Activated naive CD4-positive, alpha-beta T cell treated with anti-CD3 and anti-CD28 coated beads for 36 hours (primary cell): ENCODE measurements at regions of chr14 and their contacts with region 1.

Region 1: DNA sequence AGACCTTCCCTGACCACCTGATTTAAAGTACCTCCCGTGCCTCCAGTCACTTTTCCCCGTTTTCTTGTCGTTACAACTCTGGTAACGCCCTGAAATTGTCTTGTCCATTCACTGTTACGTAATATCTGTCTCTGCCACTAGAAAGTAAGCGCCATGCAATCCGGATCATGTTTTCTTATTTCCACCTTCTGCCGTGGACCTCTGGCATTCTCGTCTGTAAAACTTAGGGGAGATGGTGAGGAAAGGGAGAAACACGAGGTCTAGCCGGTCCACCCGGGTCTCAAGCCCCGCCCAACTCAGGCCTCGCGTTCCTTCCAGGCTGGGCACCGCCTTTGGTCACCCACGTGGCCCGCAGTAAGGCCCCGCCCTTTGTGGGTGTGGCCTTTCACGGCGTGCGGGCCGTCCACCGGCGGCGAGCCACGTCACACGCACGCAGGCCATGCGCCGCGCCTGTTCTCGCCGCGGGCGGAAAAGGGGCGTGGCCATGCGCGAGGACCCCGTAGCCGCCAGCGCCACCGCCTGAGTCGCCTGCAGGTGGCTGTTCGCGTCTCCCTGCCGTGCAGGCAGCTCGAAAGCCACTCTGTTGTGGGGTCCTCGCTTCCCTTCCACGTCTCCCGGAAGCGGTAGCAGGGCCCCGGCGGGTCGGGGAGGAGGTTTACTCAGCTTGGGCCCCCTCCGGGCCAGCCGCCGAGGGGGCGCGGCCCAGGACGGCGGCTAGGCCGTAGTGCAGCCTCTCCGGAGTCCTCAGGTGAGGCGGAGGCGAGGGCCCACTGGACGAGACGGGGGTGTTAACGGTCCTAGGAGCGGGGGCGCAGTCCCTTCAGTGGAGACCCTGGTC is at the start of gene GOLGA5:
- DNase-seq: peak; percentile 98
- H3K4me3 Mint-ChIP-seq: peak within 1 kb of the TSS; percentile 99
- H3K27ac Mint-ChIP-seq: peak within 1 kb of the TSS; percentile 92
- H3K4me1 Mint-ChIP-seq: peaks cover 39% of the 10 kb centered on the region
- H3K27me3 Mint-ChIP-seq: no peaks in the 10 kb centered on the region
- total RNA-seq, gene GOLGA5: 14.5 to 14.7 TPM

Region 2: DNA sequence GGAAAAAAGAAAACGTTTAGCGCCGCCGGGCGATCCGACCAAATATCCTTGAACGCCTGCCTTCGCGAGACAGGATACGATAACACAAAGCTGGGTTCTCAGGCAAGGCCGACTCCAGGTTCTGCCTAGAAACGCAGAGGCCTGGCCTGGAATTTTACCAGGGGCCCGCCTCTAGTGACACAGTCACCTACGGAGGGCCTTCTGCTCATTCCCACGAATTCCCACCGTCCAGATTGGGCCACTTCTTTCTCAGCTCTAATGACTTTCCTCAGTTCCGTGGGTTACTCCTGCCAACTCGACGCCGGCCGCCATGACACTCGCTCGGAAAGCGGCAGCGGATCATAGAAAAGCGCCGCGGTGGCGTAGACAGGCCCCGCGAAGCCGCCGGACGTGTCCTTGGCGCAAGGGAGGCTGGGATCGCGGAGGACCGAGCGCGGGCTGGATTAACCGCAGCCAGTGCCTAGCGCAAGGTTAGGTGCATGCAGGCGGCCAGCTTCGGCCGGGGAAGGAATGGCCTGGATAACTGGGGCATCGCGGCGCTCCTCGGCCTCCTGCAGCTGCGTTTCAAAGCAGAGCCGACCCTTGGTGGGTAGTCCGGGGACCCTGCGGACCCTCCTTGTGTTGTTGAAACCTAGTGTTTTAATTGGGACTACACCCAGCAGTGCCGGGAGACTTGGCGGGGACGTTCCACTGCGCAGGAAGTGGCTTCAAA is 754.1 kb before region 1 on chr14 and contains the start of gene TRIP11:
- CTCF ChIA-PET with region 1: no interaction called
- intact Hi-C with region 1: loop called (anchors 2 kb)
- DNase-seq: peak; percentile 97
- H3K4me3 Mint-ChIP-seq: peak within 1 kb of the TSS; percentile 98
- H3K27ac Mint-ChIP-seq: peak within 1 kb of the TSS; percentile 98
- H3K4me1 Mint-ChIP-seq: peaks cover 32% of the 10 kb centered on the region
- H3K27me3 Mint-ChIP-seq: no peaks in the 10 kb centered on the region
- total RNA-seq, gene TRIP11: 22.7 to 26.1 TPM

Region 3: GRCh38 chr14:92748259-92749016 is 45.5 kb before region 1 on chr14 and contains the start of gene LGMN:
- CTCF ChIA-PET with region 1: interaction called, 3 read pairs
- intact Hi-C with region 1: loop called (anchors 1 kb)
- DNase-seq: peak; percentile 90
- H3K4me3 Mint-ChIP-seq: peak within 1 kb of the TSS; percentile 81
- H3K27ac Mint-ChIP-seq: no peak within 1 kb of the TSS
- H3K4me1 Mint-ChIP-seq: peaks cover 35% of the 10 kb centered on the region
- H3K27me3 Mint-ChIP-seq: peaks cover 4% of the 10 kb centered on the region
- total RNA-seq, gene LGMN: 6.9 to 7.7 TPM

Region 4: DNA sequence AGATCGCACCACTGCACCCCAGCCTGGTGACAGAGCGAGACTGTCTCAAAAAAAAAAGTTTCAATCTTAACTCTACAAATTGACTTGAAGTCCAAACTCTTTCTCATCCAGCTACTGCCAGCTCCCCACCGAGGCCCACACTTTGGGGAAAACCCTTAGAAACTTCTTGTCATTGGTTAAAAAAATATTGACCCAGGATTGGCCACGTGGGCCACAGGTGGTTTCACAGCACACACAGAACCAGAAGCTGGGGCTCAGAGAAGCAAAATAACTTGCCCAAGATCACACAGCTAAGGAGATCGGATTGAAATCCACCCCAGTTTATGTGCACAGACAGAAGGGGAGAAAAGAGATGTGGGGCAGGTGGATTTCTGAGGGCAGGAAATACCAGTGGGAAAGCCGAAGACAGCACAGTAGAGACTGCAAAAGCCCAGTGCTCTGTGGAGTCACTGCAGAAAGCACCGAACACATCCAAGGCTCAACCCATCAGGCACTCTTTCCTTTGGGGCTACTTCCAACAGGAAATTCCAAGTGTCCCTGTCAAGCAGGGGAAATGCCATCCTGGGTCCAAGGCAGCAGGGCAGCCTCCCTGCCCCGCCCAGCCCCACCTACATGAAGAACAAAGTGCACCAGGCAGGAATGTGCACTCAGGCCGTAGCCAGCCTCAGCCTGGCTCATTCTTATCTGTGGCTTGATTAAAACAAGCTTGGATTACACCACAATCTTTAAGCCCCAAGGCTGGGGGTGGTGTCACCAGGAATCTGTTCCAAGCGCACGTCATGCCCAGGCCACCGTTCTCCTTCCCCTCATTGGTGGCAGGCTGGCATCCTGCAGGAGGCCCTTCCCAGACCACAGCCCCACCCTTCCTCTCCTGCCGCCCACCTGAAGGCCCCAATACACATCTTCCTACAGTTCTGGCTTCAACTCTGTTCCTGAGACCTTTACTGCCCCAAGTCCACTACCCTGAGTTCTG is 249.3 kb after region 1 on chr14:
- CTCF ChIA-PET with region 1: no interaction called
- intact Hi-C with region 1: no loop called
- DNase-seq: no peak
- H3K4me3 Mint-ChIP-seq: no peak overlapping the region
- H3K27ac Mint-ChIP-seq: no peak overlapping the region
- H3K4me1 Mint-ChIP-seq: peaks cover 16% of the 10 kb centered on the region
- H3K27me3 Mint-ChIP-seq: no peaks in the 10 kb centered on the region

Region 5: GRCh38 chr14:93184388-93185353 is 390.7 kb after region 1 on chr14 and contains the starts of genes LYSET and MOAP1:
- CTCF ChIA-PET with region 1: no interaction called
- intact Hi-C with region 1: loop called (anchors 2 kb)
- DNase-seq: peak; percentile 91
- H3K4me3 Mint-ChIP-seq: peak within 1 kb of the TSS; percentile 88
- H3K27ac Mint-ChIP-seq: peak within 1 kb of the TSS; percentile 91
- H3K4me1 Mint-ChIP-seq: peaks cover 42% of the 10 kb centered on the region
- H3K27me3 Mint-ChIP-seq: no peaks in the 10 kb centered on the region
- total RNA-seq, gene LYSET: 11.4 to 11.6 TPM
- total RNA-seq, gene MOAP1: 11.9 to 13.1 TPM

Region 6: DNA sequence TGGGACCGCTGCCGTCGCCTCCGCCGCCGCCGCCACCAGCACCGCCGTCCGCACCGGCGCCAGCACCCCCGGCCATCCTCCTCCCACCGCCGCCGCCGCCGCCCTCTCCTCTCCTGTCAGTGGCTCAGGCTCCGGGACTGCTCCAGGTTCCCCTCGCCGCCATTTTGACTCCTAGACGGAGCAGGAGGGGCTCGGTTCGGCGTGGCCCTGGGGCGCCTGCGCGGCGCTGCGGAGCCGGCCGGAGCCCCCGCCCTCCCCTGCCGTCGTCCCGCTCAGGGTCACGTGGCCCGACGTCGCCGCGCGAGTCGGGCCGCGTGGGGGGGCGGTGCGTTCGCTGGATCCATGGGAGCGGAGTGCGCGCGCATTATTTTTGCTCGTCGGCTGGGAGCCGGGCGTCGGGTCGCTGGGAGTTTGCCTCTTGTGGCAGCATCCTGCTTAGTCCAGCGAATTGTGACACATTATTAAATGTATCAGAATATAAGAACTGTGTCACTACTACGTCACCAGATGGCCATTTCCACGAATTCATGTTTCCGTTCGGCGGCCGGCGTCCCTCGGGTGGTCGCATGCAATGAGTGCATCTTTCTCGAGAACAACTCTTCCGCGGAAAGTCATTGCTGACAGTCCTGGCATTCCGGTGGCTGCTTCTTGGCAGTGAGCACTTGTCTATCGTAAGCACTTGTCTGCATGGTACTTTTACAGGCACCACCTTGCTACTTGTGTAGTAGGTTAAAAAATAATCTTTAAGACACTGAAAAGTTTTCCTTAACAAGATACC is 539.1 kb after region 1 on chr14 and contains the start of gene BTBD7:
- CTCF ChIA-PET with region 1: no interaction called
- intact Hi-C with region 1: loop called (anchors 5 kb)
- DNase-seq: peak; percentile 94
- H3K4me3 Mint-ChIP-seq: peak within 1 kb of the TSS; percentile 89
- H3K27ac Mint-ChIP-seq: peak within 1 kb of the TSS; percentile 83
- H3K4me1 Mint-ChIP-seq: peaks cover 49% of the 10 kb centered on the region
- H3K27me3 Mint-ChIP-seq: no peaks in the 10 kb centered on the region
- total RNA-seq, gene BTBD7: 7.2 to 7.7 TPM